A673 (cell line): ENCODE measurements at regions of chr12 and their contacts with region 1.

Region 1: GRCh38 chr12:71551529-71551928 is 111.9 kb downstream of the LGR5 start:
- DNase-seq: peak; percentile 58
- H3K4me3 ChIP-seq: no peak overlapping the region
- H3K27ac ChIP-seq: no peak overlapping the region
- H3K4me1 ChIP-seq: peaks cover 3% of the 10 kb centered on the region
- H3K27me3 ChIP-seq: no peaks in the 10 kb centered on the region
- CTCF ChIP-seq: peak; percentile 79

Region 2: GRCh38 chr12:71415336-71416231 is 135.9 kb before region 1 on chr12:
- CTCF ChIA-PET with region 1: interaction called, 12 read pairs
- POLR2A ChIA-PET with region 1: no interaction called
- intact Hi-C with region 1: loop called (anchors 1 kb)
- DNase-seq: peak; percentile 76
- H3K4me3 ChIP-seq: no peak overlapping the region
- H3K27ac ChIP-seq: no peak overlapping the region
- H3K4me1 ChIP-seq: peaks cover 4% of the 10 kb centered on the region
- H3K27me3 ChIP-seq: no peaks in the 10 kb centered on the region
- CTCF ChIP-seq: peak; percentile 88